ENCODE measurements at regions of chr9 and their contacts with region 1.

Region 1: GRCh38 chr9:134698587-134699342 is 57.2 kb downstream of the COL5A1 start:
- DNase-seq: no peak
- ATAC-seq: peak; percentile 89
- H3K4me3 ChIP-seq: no peak overlapping the region
- H3K27ac ChIP-seq: no peak overlapping the region
- H3K4me1 ChIP-seq: no peaks in the 10 kb centered on the region
- H3K27me3 ChIP-seq: no peaks in the 10 kb centered on the region; a peak in 1 of 4 replicates
- CTCF ChIP-seq: peak; percentile 85 to 92 (median 89); a peak in 5 of 6 replicates
- EP300 ChIP-seq: no peak
- POLR2A ChIP-seq: no peak
- RAD21 ChIP-seq: peak; percentile 90

Region 2: GRCh38 chr9:134626571-134627416 is 72.0 kb before region 1 on chr9:
- CTCF ChIA-PET with region 1: no interaction called
- POLR2A ChIA-PET with region 1: no interaction called
- RAD21 ChIA-PET with region 1: no interaction called
- SMC1A ChIA-PET with region 1: no interaction called
- in situ Hi-C with region 1: no loop called
- intact Hi-C with region 1: no loop called
- DNase-seq: no peak
- ATAC-seq: no peak
- H3K4me3 ChIP-seq: no peak overlapping the region
- H3K27ac ChIP-seq: no peak overlapping the region
- H3K4me1 ChIP-seq: no peaks in the 10 kb centered on the region
- H3K27me3 ChIP-seq: peaks cover 0 to 2% of the 10 kb centered on the region in 2 experiments; a peak in 1 of 4 replicates
- CTCF ChIP-seq: no peak
- EP300 ChIP-seq: no peak
- POLR2A ChIP-seq: no peak
- RAD21 ChIP-seq: no peak

Region 3: DNA sequence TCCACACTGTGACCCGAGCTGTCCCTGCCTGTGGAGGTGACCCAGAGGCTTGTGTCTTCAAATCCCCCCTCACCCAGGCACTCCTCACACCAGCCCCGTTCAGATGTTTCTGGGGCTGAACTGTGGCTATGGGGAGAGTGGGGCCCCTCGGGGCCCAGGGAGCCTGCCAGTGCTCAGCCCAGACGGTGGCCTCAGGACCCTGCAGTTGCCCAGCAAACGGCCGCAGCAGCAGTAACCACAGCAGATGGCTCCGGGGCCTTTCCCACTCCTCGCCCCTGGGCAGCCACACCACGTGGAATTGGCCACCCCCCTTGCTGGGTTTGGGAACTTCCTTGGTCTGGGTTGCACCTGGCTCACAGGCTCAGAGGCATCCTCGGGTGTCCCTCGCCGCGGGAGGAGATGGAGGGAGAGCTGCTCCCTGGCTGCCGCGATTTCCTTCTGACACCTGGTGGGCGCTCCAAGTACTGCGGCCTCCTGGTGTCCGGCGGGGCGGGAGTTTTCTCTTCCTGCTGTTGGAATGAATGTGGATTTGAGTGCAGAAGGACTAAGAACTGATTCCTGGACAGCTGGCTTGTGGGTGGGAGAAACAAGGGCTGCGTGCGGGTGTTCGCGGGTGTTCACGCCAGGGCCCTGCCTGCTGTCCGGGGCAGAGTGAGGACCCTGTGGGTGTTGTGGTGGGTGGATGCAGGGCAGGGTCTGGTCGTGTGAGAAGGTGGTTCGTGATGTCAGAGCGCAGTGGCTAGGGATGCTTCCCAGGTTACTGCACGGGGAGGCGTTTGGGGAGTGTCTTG is 40.3 kb after region 1 on chr9:
- CTCF ChIA-PET with region 1: no interaction called
- POLR2A ChIA-PET with region 1: no interaction called
- RAD21 ChIA-PET with region 1: no interaction called
- SMC1A ChIA-PET with region 1: no interaction called
- in situ Hi-C with region 1: no loop called
- intact Hi-C with region 1: loop called (anchors 1 kb)
- DNase-seq: no peak
- ATAC-seq: no peak
- H3K4me3 ChIP-seq: no peak overlapping the region
- H3K27ac ChIP-seq: no peak overlapping the region
- H3K4me1 ChIP-seq: no peaks in the 10 kb centered on the region
- H3K27me3 ChIP-seq: no peaks in the 10 kb centered on the region
- CTCF ChIP-seq: peak; percentile 32 to 54 (median 49)
- EP300 ChIP-seq: no peak
- POLR2A ChIP-seq: no peak
- RAD21 ChIP-seq: peak; percentile 35

Region 4: DNA sequence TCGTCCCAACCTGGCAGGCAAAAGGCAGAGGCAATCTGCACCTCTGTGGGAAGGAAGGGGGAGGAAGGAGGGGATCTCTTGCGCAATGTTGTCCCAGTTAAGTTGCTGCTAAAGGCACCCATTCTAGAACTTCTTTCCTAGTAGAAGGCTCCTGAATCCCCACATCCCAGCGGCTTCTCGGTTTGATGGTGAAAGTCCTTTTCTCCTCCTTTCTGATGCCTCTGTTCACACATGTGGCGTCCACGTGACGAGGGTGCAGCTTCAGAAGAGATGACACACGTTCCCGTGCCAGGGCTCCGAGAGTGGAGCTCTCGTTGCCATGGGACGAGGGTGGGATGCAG is 84.9 kb after region 1 on chr9:
- CTCF ChIA-PET with region 1: no interaction called
- POLR2A ChIA-PET with region 1: no interaction called
- RAD21 ChIA-PET with region 1: no interaction called
- SMC1A ChIA-PET with region 1: no interaction called
- in situ Hi-C with region 1: no loop called
- intact Hi-C with region 1: no loop called
- DNase-seq: no peak
- ATAC-seq: no peak
- H3K4me3 ChIP-seq: no peak overlapping the region
- H3K27ac ChIP-seq: no peak overlapping the region
- H3K4me1 ChIP-seq: 0 out of 2 replicates have a peak, but pooled peaks cover 3% of the 10 kb centered on the region
- H3K27me3 ChIP-seq: no peaks in the 10 kb centered on the region; a peak in 2 of 4 replicates
- CTCF ChIP-seq: no peak
- EP300 ChIP-seq: no peak
- POLR2A ChIP-seq: no peak
- RAD21 ChIP-seq: no peak

Region 5: DNA sequence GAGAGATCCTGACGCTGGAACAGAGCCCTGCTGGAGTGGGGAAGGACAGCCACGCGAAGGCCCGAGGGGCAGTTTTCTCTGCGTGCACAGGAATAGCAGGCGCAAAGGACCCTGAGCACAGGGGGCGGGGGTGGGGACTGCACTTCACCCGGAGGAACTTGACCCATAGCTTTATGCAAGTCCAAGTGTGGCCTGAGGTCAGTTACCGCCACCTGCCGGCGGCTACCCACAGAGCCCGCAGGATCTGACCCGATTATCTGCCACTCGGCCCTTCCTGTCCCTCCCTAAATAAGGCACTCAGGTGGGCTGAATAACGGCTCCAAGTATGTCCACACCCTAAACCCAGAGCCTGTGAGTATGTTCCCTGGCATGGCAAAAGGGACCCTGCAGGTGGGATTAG is 284.3 kb after region 1 on chr9:
- CTCF ChIA-PET with region 1: interaction called, 8 read pairs
- POLR2A ChIA-PET with region 1: no interaction called
- RAD21 ChIA-PET with region 1: interaction called, 3 read pairs
- SMC1A ChIA-PET with region 1: no interaction called
- in situ Hi-C with region 1: loop called (anchors 5 kb)
- intact Hi-C with region 1: loop called (anchors 5 kb)
- DNase-seq: peak; percentile 2
- ATAC-seq: peak; percentile 54
- H3K4me3 ChIP-seq: no peak overlapping the region
- H3K27ac ChIP-seq: no peak overlapping the region
- H3K4me1 ChIP-seq: no peaks in the 10 kb centered on the region
- H3K27me3 ChIP-seq: no peaks in the 10 kb centered on the region
- CTCF ChIP-seq: peak; percentile 55 to 73 (median 65); a peak in 5 of 6 replicates
- EP300 ChIP-seq: no peak
- POLR2A ChIP-seq: no peak
- RAD21 ChIP-seq: peak; percentile 71

Region 6: DNA sequence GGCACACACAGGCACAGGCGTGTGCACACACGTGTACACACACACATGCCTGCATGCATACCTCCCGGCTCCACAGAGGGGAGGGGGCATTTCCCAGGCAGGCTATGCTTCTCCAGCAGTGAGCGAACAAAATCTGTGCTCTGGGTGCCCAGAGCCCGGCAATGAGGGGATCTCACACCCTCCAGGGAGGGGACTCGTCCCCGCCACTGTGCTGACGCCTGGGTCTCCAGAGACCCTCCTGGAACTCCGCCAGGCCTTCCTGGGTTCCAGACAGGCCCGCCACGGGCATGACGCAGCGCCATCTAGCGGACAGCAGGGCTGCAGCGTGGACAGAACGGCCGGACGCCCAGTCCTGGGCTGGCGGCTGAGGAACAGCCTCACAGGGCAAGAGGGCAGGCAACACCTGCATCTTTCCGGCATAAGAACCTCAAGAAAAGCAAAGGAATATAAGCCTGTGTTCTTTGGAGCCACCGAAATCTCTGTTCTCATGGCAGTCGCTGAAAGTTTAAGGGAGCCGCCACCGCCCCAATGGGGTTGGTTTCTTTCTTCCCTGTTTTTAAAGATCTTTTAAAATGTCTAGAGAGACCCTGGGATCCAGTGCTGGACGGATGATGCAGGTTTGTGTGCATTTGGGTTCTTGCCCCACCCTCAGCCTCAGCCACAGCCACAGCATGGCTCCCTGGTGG is 645.2 kb after region 1 on chr9:
- CTCF ChIA-PET with region 1: no interaction called
- POLR2A ChIA-PET with region 1: no interaction called
- RAD21 ChIA-PET with region 1: no interaction called
- SMC1A ChIA-PET with region 1: no interaction called
- in situ Hi-C with region 1: loop called (anchors 10 kb)
- intact Hi-C with region 1: no loop called
- DNase-seq: no peak
- ATAC-seq: peak; percentile 85
- H3K4me3 ChIP-seq: no peak overlapping the region
- H3K27ac ChIP-seq: no peak overlapping the region
- H3K4me1 ChIP-seq: no peaks in the 10 kb centered on the region
- H3K27me3 ChIP-seq: peaks cover 0 to 4% of the 10 kb centered on the region in 2 experiments; a peak in 2 of 4 replicates
- CTCF ChIP-seq: peak; percentile 66 to 91 (median 82)
- EP300 ChIP-seq: no peak
- POLR2A ChIP-seq: no peak
- RAD21 ChIP-seq: peak; percentile 65